ENCODE measurements at regions of chr14 and their contacts with region 1.

Region 1: GRCh38 chr14:73633116-73634010 is 11.4 kb upstream of the DNAL1 start:
- DNase-seq: peak; percentile 41
- H3K4me3 Mint-ChIP-seq: peak overlapping the region; percentile 19
- H3K27ac Mint-ChIP-seq: no peak overlapping the region
- H3K4me1 Mint-ChIP-seq: peaks cover 5% of the 10 kb centered on the region
- H3K27me3 Mint-ChIP-seq: peaks cover 32% of the 10 kb centered on the region

Region 2: GRCh38 chr14:73503648-73504047 is 129.7 kb before region 1 on chr14:
- intact Hi-C with region 1: loop called (anchors 2 kb)
- DNase-seq: no peak
- H3K4me3 Mint-ChIP-seq: no peak overlapping the region
- H3K27ac Mint-ChIP-seq: no peak overlapping the region
- H3K4me1 Mint-ChIP-seq: no peaks in the 10 kb centered on the region
- H3K27me3 Mint-ChIP-seq: no peaks in the 10 kb centered on the region

Region 3: DNA sequence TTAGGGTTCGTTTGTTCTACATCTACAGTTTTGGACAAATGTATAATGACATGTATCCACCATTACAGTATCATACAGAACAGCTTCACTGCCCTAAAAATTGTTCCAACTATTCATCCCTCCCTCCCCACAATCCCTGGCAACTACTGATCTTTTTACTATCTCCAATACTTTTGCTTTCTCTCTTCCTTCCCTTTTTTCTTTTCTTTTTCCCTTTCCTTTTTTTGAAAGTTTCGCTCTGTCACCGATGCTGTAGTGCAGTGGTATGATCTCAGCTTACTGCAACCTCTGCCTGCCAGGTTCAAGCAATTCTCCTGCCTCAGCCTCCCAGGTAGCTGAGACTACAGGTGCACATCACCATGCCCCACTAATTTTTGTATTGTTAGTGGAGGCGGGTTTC is 44.2 kb before region 1 on chr14:
- intact Hi-C with region 1: no loop called
- DNase-seq: no peak
- H3K4me3 Mint-ChIP-seq: no peak overlapping the region
- H3K27ac Mint-ChIP-seq: no peak overlapping the region
- H3K4me1 Mint-ChIP-seq: peaks cover 3% of the 10 kb centered on the region
- H3K27me3 Mint-ChIP-seq: peaks cover 14% of the 10 kb centered on the region

Region 4: DNA sequence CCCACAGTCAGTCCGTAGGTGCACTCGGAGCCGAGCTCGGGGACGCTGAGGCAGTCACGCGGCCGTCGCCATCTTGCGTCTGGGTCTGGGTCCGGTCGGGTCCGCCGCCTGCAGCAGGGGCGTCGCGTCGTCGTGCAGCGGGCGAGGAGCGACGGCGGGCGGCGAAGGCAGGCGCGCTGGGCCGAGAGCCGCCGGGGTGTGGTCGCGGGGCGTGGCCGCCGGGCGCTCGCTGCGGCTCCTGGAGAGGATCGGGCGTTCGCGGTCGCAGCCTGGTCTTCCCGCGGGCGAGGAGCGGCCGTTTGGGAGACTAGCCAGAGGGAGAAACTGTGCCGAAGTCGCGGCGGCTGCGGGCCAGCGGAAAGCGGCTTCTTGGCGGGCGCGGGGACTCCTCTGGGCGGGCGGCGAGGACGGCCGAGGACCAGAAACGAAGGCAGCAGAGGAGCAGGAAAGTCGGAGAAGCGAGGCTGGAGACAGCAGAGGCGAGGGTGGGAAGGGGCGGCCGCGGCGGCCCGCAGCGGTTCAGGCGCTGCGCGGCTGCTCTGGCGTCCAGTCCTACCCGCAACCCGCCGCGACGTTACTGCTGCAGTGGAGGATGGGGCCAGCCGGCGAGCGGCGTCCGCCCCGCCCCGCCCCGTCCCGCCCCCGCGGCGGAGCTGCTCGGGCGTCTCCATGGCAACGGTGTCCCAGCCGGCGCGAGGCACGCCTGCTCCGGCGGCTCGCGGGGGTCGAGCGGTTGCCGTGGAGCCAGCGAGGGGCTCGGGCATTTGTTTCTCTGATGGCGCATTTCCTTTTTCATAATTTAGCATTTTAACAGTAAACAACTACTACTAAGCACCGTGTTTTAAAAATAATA is 80.7 kb after region 1 on chr14 and contains the start of gene PNMA1:
- intact Hi-C with region 1: no loop called
- DNase-seq: peak; percentile 85
- H3K4me3 Mint-ChIP-seq: peak within 1 kb of the TSS; percentile 86
- H3K27ac Mint-ChIP-seq: peak within 1 kb of the TSS; percentile 92
- H3K4me1 Mint-ChIP-seq: peaks cover 16% of the 10 kb centered on the region
- H3K27me3 Mint-ChIP-seq: no peaks in the 10 kb centered on the region
- total RNA-seq, gene PNMA1: 30.1 and 32.1 TPM in 2 replicates